ENCODE measurements at regions of chr3 and their contacts with region 1.

Region 1: DNA sequence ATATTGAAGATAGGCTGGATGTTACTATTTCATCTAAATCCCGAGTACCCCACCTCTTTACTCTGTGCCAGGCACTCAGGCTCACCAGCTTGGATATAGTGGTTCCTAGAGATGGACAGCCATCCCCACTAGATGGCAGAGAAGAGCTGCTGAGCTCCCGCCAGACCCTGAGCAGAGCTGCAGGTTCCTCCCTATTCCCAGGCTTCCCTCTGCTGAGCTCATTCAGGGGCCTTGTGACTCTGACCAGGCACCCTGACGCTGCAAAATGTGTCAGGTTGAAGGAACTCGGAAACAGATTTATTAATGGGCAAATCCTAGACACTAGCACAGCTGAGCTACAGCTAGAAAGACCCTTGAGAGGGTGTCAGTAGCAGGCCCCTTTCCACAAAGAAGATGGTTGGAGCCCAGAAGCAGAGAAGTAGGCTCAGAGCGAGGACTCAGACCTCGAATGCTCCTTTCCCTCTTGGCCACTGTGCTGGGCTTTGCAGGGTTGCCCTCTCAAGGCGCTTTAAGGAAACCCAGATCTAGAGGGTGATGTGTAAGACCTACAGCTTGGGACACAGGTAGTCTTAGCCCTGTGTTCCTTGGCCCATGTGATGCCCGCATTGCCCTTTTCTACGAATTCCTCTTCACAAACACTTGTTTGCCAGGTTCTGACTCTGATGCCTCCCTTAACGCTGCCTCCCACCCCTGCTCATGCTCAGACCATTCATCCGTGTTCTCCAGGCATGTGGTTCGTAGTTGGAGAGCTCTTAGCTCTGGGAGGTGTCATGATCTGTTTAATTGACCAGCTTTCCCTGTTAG is 38.0 kb upstream of the RHO start:
- H3K4me3 ChIP-seq: no peak overlapping the region
- H3K27ac ChIP-seq: no peak overlapping the region
- H3K4me1 ChIP-seq: no peaks in the 10 kb centered on the region
- CTCF ChIP-seq: peak; percentile 48

Region 2: DNA sequence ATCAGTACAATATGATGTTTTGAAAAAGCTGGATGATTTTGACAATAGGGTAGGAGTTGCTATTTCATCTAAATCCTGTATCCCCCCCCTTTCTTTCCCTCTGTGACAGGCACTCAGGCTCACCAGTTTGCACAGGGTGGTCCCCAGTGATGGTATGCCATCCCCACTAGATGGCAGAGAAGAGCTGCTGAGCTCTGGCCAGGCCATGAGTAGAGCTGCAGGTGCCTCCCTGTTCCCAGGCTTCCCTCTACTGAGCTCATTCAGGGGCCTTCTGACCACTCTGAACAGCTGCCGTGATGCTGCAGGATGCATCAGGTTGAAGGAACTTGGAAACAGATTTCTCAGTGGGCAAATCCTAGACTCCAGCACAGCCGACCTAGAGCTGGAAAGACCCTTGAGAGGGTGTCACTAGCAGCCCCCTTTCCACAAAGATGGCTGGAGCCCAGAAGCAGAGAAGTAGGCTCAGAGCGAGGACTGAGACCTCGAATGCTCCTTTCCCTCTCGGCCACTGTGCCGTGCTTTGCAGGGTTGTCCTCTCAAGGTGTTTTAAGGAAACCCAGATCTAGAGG is 107.1 kb before region 1 on chr3:
- CTCF ChIA-PET with region 1: interaction called, 19 read pairs
- POLR2A ChIA-PET with region 1: no interaction called
- H3K4me3 ChIP-seq: no peak overlapping the region
- H3K27ac ChIP-seq: no peak overlapping the region
- H3K4me1 ChIP-seq: no peaks in the 10 kb centered on the region
- CTCF ChIP-seq: peak; percentile 66

Region 3: DNA sequence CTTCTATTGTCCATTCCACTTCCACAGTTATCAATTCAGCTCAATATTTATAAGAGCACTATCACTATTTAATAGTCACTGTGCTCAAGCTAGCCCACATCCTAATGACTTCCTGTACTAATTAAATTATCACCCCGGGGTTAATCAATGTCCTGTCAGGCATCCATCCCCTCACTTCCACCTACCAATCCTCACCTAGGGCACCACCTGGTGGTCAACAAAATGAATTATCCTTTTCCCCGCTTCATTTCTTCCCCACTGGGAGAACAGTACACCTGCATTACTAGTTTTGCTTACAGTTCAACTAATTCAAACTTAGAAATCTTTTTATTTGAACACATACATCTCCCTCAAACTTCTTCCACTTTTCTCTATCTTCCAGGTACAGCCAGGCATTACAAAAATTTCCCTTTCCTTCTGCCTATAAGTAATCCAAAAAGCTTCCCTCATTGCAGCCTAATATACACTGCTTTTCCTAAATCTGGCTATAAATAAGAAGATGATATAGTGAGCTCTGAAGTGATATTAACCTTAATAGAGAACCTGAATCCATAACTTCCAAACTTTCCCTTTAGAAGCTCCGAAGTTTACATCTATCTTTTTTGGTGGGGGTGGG is 334.6 kb after region 1 on chr3:
- CTCF ChIA-PET with region 1: interaction called, 18 read pairs
- POLR2A ChIA-PET with region 1: no interaction called
- H3K4me3 ChIP-seq: no peak overlapping the region
- H3K27ac ChIP-seq: no peak overlapping the region
- H3K4me1 ChIP-seq: no peaks in the 10 kb centered on the region
- CTCF ChIP-seq: peak; percentile 64